GM12878 (cell line): ENCODE measurements at regions of chr19 and their contacts with region 1.

Region 1: GRCh38 chr19:49497047-49497788 is 984 bp downstream of the RPS11 start:
- DNase-seq: no peak
- ATAC-seq: peak; percentile 41
- H3K4me3 ChIP-seq: peak overlapping the region; percentile 79
- H3K27ac ChIP-seq: peak overlapping the region; percentile 85
- H3K4me1 ChIP-seq: peaks cover 35% of the 10 kb centered on the region
- H3K27me3 ChIP-seq: no peaks in the 10 kb centered on the region
- CTCF ChIP-seq: no peak
- EP300 ChIP-seq: no peak
- POLR2A ChIP-seq: peak; percentile 74
- RAD21 ChIP-seq: no peak

Region 2: GRCh38 chr19:49665351-49666119 is 168.3 kb after region 1 on chr19 and contains the starts of genes BCL2L12 and IRF3:
- CTCF ChIA-PET with region 1: no interaction called
- POLR2A ChIA-PET with region 1: no interaction called
- RAD21 ChIA-PET with region 1: no interaction called
- SMC1A ChIA-PET with region 1: no interaction called
- in situ Hi-C with region 1: loop called (anchors 5 kb)
- intact Hi-C with region 1: no loop called
- DNase-seq: peak; percentile 84
- ATAC-seq: peak; percentile 92
- H3K4me3 ChIP-seq: peak within 1 kb of the TSS; percentile 99
- H3K27ac ChIP-seq: peak within 1 kb of the TSS; percentile 91
- H3K4me1 ChIP-seq: peaks cover 14% of the 10 kb centered on the region
- H3K27me3 ChIP-seq: no peaks in the 10 kb centered on the region
- CTCF ChIP-seq: no peak; a peak in 1 of 6 replicates
- EP300 ChIP-seq: no peak
- POLR2A ChIP-seq: peak; percentile 74
- RAD21 ChIP-seq: no peak
- polyA plus RNA-seq, gene BCL2L12: 1.8 to 7.9 TPM
- polyA plus RNA-seq, gene IRF3: 5.5 to 17.2 TPM